Heart left ventricle (tissue), 16 donors: ENCODE measurements at regions of chr3 and their contacts with region 1.

Region 1: DNA sequence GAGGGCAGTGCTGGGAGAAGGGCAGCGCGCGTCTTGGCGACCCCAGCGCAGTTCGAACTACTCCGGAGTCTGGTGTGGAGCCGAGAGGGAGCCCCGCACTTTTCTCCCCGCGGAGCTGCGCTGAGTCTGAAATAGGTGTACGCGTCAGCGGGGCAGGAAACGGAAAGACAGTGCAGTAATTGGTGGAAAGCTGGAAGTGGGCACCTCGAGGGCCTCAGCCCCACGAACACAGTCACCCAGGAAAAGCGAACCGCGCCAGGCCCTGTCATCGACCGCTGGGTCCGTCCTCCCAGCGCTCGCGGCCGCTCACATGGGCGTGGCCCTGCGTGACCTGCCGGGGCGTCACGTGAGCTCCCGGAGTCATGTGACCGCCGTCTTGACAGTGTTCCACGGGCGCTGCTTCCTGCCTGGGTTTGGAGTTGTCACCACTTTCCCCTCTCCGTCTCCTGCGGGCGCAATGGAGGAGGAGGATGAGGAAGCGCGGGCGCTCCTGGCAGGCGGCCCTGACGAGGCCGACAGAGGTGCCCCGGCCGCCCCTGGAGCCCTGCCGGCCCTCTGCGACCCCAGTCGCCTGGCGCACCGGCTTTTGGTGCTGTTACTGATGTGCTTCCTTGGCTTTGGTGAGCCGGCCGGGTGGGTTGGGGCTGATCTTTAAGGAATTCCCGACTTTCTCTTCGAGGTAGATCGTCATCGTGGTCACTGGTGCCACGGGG is at the start of gene MFSD1:
- DNase-seq: peak; percentile 95 to 98 (median 97)
- ATAC-seq: peak; percentile 96 to 99 (median 99)
- H3K4me3 ChIP-seq: peak within 1 kb of the TSS; percentile 71 to 95 (median 84)
- H3K27ac ChIP-seq: peak within 1 kb of the TSS; percentile 37 to 95 (median 84)
- H3K4me1 ChIP-seq: peaks cover 0 to 37% (median 14%) of the 10 kb centered on the region in 12 donors
- H3K27me3 ChIP-seq: no peaks in the 10 kb centered on the region
- CTCF ChIP-seq: no peak
- POLR2A ChIP-seq: peak in 1 of 2 donors; percentile 76
- total RNA-seq, gene MFSD1: 19.2 to 71.4 (median 35.7) TPM

Region 2: GRCh38 chr3:158649791-158650190 is 152.1 kb before region 1 on chr3:
- intact Hi-C with region 1: loop called in 1 of 10 experiments (anchors 5 kb)
- DNase-seq: peak in 1 of 5 donors; percentile 33
- ATAC-seq: peak in 3 of 4 donors; percentile 67 to 84 (median 80)
- H3K4me3 ChIP-seq: no peak overlapping the region
- H3K27ac ChIP-seq: peak overlapping the region in 3 of 12 donors; percentile 17 to 34 (median 17)
- H3K4me1 ChIP-seq: peaks cover 6 to 33% (median 21%) of the 10 kb centered on the region in 12 donors
- H3K27me3 ChIP-seq: no peaks in the 10 kb centered on the region
- CTCF ChIP-seq: no peak
- POLR2A ChIP-seq: no peak